ENCODE measurements at regions of chr19 and their contacts with region 1.

Region 1: GRCh38 chr19:10269333-10270179 is 1.4 kb upstream of the ICAM1 start:
- DNase-seq: peak; percentile 88
- ATAC-seq: peak; percentile 48
- H3K4me3 Mint-ChIP-seq: peak overlapping the region; percentile 87
- H3K27ac Mint-ChIP-seq: peak overlapping the region; percentile 92
- H3K4me1 Mint-ChIP-seq: peaks cover 38% of the 10 kb centered on the region
- H3K27me3 Mint-ChIP-seq: no peaks in the 10 kb centered on the region
- CTCF ChIP-seq: peak; percentile 71

Region 2: DNA sequence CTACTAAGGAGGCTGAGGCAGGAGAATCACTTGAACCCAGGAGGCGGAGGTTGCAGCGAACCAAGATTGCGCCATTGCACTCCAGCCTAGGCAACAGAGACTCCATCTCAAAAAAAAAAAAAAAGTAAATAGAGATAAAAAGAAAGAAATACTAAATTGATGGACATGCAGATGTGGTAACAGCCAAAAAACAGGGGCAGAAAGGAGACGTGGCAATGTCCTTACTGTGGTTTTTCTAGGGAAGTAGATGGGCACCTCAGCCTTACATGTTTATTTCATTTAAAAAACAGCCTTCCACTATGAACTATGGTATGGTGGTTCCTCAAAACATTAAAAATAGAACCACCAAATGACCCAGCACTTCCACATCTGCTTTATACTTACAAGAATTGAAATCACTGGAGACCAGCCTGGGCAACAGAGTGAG is 143.3 kb before region 1 on chr19:
- CTCF ChIA-PET with region 1: no interaction called
- POLR2A ChIA-PET with region 1: no interaction called
- intact Hi-C with region 1: no loop called
- DNase-seq: no peak
- ATAC-seq: peak; percentile 83
- H3K4me3 Mint-ChIP-seq: no peak overlapping the region
- H3K27ac Mint-ChIP-seq: peak overlapping the region; percentile 53
- H3K4me1 Mint-ChIP-seq: peaks cover 17% of the 10 kb centered on the region
- H3K27me3 Mint-ChIP-seq: no peaks in the 10 kb centered on the region
- CTCF ChIP-seq: no peak

Region 3: DNA sequence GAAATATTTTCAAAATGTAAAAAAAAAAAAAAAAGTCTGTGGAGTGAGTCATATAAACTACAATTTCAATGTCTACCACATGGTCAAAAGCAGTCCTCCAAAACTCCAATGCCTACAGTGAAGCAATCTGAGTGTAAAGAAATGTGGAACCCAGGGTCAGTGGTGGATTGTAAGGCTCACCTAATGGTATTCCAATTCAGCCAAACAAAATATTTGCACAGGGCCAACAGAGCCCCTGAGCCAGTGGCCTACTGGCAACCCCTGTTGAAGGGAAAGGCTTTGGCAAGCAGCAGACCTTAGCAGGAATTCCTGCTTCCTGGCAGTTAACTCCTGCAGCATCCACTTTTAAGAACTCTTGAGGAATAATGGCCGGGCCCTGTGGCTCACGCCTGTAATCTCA is 78.2 kb before region 1 on chr19:
- CTCF ChIA-PET with region 1: no interaction called
- POLR2A ChIA-PET with region 1: no interaction called
- intact Hi-C with region 1: no loop called
- DNase-seq: no peak
- ATAC-seq: no peak
- H3K4me3 Mint-ChIP-seq: no peak overlapping the region
- H3K27ac Mint-ChIP-seq: no peak overlapping the region
- H3K4me1 Mint-ChIP-seq: peaks cover 22% of the 10 kb centered on the region
- H3K27me3 Mint-ChIP-seq: no peaks in the 10 kb centered on the region
- CTCF ChIP-seq: no peak

Region 4: GRCh38 chr19:10238172-10238783 is 31.3 kb before region 1 on chr19:
- CTCF ChIA-PET with region 1: interaction called, 4 read pairs
- POLR2A ChIA-PET with region 1: interaction called, 14 read pairs
- intact Hi-C with region 1: loop called (anchors 2 kb)
- DNase-seq: no peak
- ATAC-seq: no peak
- H3K4me3 Mint-ChIP-seq: no peak overlapping the region
- H3K27ac Mint-ChIP-seq: peak overlapping the region; percentile 73
- H3K4me1 Mint-ChIP-seq: peaks cover 51% of the 10 kb centered on the region
- H3K27me3 Mint-ChIP-seq: no peaks in the 10 kb centered on the region
- CTCF ChIP-seq: no peak

Region 5: GRCh38 chr19:10279737-10280442 is 10.3 kb after region 1 on chr19:
- CTCF ChIA-PET with region 1: interaction called, 9 read pairs
- POLR2A ChIA-PET with region 1: interaction called, 128 read pairs
- intact Hi-C with region 1: no loop called
- DNase-seq: no peak
- ATAC-seq: no peak
- H3K4me3 Mint-ChIP-seq: no peak overlapping the region
- H3K27ac Mint-ChIP-seq: peak overlapping the region; percentile 59
- H3K4me1 Mint-ChIP-seq: peaks cover 30% of the 10 kb centered on the region
- H3K27me3 Mint-ChIP-seq: no peaks in the 10 kb centered on the region
- CTCF ChIP-seq: no peak

Region 6: GRCh38 chr19:10315335-10316214 is 46.0 kb after region 1 on chr19 and contains the start of gene FDX2:
- CTCF ChIA-PET with region 1: no interaction called
- POLR2A ChIA-PET with region 1: interaction called, 13 read pairs
- intact Hi-C with region 1: loop called (anchors 1 kb)
- DNase-seq: peak; percentile 85
- ATAC-seq: peak; percentile 92
- H3K4me3 Mint-ChIP-seq: peak within 1 kb of the TSS; percentile 87
- H3K27ac Mint-ChIP-seq: peak within 1 kb of the TSS; percentile 71
- H3K4me1 Mint-ChIP-seq: peaks cover 15% of the 10 kb centered on the region
- H3K27me3 Mint-ChIP-seq: no peaks in the 10 kb centered on the region
- CTCF ChIP-seq: no peak
- total RNA-seq, gene FDX2: 12.8 and 15.0 TPM in 2 replicates

Region 7: DNA sequence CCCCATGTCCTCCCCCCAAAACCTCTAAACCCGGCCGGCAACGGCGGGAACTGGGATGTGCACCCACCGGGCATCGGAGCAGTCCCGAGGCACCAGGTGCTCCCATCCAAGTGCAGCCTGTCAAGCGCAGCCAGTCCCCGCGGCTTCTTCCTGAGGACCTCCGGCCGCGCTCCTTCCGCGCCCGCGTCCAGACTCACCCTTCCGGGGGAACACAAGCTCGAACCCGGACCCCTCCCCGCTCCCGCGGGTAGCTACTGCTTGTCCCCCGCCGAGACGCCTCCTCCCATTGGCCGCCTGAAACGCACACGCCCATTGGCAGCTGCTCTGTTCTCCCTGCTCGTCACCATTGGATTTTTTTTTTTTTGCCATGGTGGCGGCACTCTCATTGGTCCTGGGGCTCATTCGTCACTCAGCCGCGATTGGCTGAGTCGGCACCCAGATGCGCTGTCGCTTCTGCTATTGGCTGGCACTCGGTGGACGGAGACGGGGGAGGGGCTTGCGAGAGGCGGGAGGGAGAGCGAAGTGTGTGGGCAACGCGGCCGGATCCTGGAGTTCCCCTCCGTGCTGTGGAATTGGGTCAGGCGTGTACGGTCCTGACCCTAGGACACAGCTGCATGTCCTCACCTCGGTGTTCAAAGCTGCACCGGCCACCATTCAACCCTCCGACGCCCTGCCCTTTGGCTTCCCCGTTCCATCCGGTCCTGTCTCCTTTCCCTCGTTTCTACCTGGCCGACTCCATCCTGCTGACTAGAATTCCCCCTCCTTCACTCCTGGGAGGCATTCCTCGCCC is 111.0 kb after region 1 on chr19 and contains the start of gene TYK2:
- CTCF ChIA-PET with region 1: interaction called, 211 read pairs
- POLR2A ChIA-PET with region 1: interaction called, 120 read pairs
- intact Hi-C with region 1: loop called (anchors 2 kb)
- DNase-seq: peak; percentile 95
- ATAC-seq: peak; percentile 93
- H3K4me3 Mint-ChIP-seq: peak within 1 kb of the TSS; percentile 97
- H3K27ac Mint-ChIP-seq: peak within 1 kb of the TSS; percentile 86
- H3K4me1 Mint-ChIP-seq: peaks cover 23% of the 10 kb centered on the region
- H3K27me3 Mint-ChIP-seq: no peaks in the 10 kb centered on the region
- CTCF ChIP-seq: no peak
- total RNA-seq, gene TYK2: 302 and 356 TPM in 2 replicates

Region 8: GRCh38 chr19:10416380-10417257 is 147.1 kb after region 1 on chr19:
- CTCF ChIA-PET with region 1: interaction called, 19 read pairs
- POLR2A ChIA-PET with region 1: interaction called, 11 read pairs
- intact Hi-C with region 1: no loop called
- DNase-seq: peak; percentile 97
- ATAC-seq: peak; percentile 68
- H3K4me3 Mint-ChIP-seq: peak overlapping the region; percentile 78
- H3K27ac Mint-ChIP-seq: peak overlapping the region; percentile 80
- H3K4me1 Mint-ChIP-seq: peaks cover 70% of the 10 kb centered on the region
- H3K27me3 Mint-ChIP-seq: peaks cover 29% of the 10 kb centered on the region
- CTCF ChIP-seq: peak; percentile 79

Region 9: GRCh38 chr19:10502524-10503001 is 233.0 kb after region 1 on chr19:
- CTCF ChIA-PET with region 1: no interaction called
- POLR2A ChIA-PET with region 1: no interaction called
- intact Hi-C with region 1: loop called (anchors 1 kb)
- DNase-seq: peak; percentile 90
- ATAC-seq: peak; percentile 91
- H3K4me3 Mint-ChIP-seq: peak overlapping the region; percentile 87
- H3K27ac Mint-ChIP-seq: peak overlapping the region; percentile 90
- H3K4me1 Mint-ChIP-seq: peaks cover 23% of the 10 kb centered on the region
- H3K27me3 Mint-ChIP-seq: no peaks in the 10 kb centered on the region
- CTCF ChIP-seq: no peak

Measured in activated B cell treated with CpG ODN at 0.5 μM for 24 hours (primary cell).